CD4-positive, alpha-beta memory T cell (primary cell): ENCODE measurements at regions of chr3 and their contacts with region 1.

Region 1: DNA sequence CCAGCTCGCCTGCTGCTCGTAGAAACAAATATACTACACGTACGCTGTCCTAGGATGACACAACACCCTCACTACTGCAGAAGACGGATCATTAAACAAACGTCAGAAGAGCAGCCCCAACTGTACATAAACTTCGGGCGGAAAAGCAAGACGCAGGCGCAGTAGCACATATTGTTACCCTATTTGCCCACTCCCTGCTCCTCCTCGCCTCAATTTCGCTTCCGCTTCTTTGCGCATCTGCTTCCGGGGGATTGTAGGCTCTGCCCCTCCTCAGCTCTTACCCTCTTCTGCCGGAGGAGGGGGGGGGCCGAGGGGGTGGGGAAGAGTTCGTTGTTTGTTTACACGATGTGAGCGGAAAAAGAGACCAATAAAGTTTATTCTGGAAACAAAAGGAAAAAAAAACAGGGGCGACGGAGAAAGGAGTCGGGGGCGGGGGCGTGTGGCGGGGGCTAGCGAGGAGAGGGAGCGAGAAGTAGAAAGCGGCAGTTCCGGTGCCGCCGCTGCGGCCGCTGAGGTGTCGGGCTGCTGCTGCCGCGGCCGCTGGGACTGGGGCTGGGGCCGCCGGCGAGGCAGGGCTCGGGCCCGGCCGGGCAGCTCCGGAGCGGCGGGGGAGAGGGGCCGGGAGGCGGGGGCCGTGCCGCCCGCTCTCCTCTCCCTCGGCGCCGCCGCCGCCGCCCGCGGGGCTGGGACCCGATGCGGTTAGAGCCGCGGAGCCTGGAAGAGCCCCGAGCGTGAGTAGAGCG is at the start of gene PIK3CA:
- DNase-seq: peak; percentile 92 to 99 (median 97)
- H3K4me3 ChIP-seq: peak within 1 kb of the TSS; percentile 72 to 91
- H3K4me3 Mint-ChIP-seq: peak within 1 kb of the TSS; percentile 96 to 100 (median 98)
- H3K27ac ChIP-seq: peak within 1 kb of the TSS; percentile 89
- H3K27ac Mint-ChIP-seq: peak within 1 kb of the TSS in 6 of 7 donors; percentile 96 to 99 (median 98)
- H3K4me1 ChIP-seq: peaks cover 40% of the 10 kb centered on the region
- H3K4me1 Mint-ChIP-seq: peaks cover 26 to 41% (median 31%) of the 10 kb centered on the region in 4 donors
- H3K27me3 ChIP-seq: no peaks in the 10 kb centered on the region
- H3K27me3 Mint-ChIP-seq: no peaks in the 10 kb centered on the region
- total RNA-seq, gene PIK3CA: 45.5 to 47.2 TPM

Region 2: GRCh38 chr3:177251755-177252154 is 1896.3 kb before region 1 on chr3:
- CTCF ChIA-PET with region 1: no interaction called
- POLR2A ChIA-PET with region 1: no interaction called
- intact Hi-C with region 1: no loop called
- DNase-seq: no peak
- H3K4me3 ChIP-seq: no peak overlapping the region
- H3K4me3 Mint-ChIP-seq: no peak overlapping the region
- H3K27ac ChIP-seq: no peak overlapping the region
- H3K27ac Mint-ChIP-seq: no peak overlapping the region
- H3K4me1 ChIP-seq: no peaks in the 10 kb centered on the region
- H3K4me1 Mint-ChIP-seq: peaks cover 0 to 2% (median 0%) of the 10 kb centered on the region in 4 donors
- H3K27me3 ChIP-seq: no peaks in the 10 kb centered on the region
- H3K27me3 Mint-ChIP-seq: no peaks in the 10 kb centered on the region

Region 3: DNA sequence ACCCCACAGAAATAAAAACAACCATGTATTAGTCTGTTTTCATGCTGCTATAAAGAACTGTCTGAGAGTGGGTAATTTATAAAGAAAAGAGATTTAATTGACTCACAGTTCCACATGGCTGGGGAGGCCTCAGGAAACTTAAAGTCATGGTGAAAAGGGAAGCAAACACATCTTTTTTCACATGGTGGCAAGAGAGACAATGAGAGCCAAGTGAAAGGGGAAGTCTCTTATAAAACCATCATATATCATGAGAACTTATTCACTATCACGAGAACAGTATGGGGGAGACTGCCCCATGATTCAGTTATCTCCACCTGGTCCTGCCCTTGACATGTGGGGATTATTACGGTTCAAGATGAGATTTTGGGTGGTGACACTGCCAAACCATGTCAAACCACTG is 217.9 kb before region 1 on chr3:
- CTCF ChIA-PET with region 1: no interaction called
- POLR2A ChIA-PET with region 1: no interaction called
- intact Hi-C with region 1: no loop called
- DNase-seq: no peak
- H3K4me3 ChIP-seq: no peak overlapping the region
- H3K4me3 Mint-ChIP-seq: no peak overlapping the region
- H3K27ac ChIP-seq: no peak overlapping the region
- H3K27ac Mint-ChIP-seq: no peak overlapping the region
- H3K4me1 ChIP-seq: no peaks in the 10 kb centered on the region
- H3K4me1 Mint-ChIP-seq: no peaks in the 10 kb centered on the region
- H3K27me3 ChIP-seq: no peaks in the 10 kb centered on the region
- H3K27me3 Mint-ChIP-seq: no peaks in the 10 kb centered on the region

Region 4: GRCh38 chr3:179037351-179037750 is 110.7 kb before region 1 on chr3:
- CTCF ChIA-PET with region 1: interaction called, 5 read pairs
- POLR2A ChIA-PET with region 1: interaction called, 17 read pairs
- intact Hi-C with region 1: no loop called
- DNase-seq: peak; percentile 61 to 71 (median 65)
- H3K4me3 ChIP-seq: peak overlapping the region in 1 of 2 donors; percentile 27
- H3K4me3 Mint-ChIP-seq: peak overlapping the region in 7 of 8 donors; percentile 47 to 79 (median 75)
- H3K27ac ChIP-seq: peak overlapping the region; percentile 24
- H3K27ac Mint-ChIP-seq: peak overlapping the region in 1 of 7 donors; percentile 90
- H3K4me1 ChIP-seq: peaks cover 43% of the 10 kb centered on the region
- H3K4me1 Mint-ChIP-seq: peaks cover 11 to 23% (median 15%) of the 10 kb centered on the region in 4 donors
- H3K27me3 ChIP-seq: no peaks in the 10 kb centered on the region
- H3K27me3 Mint-ChIP-seq: no peaks in the 10 kb centered on the region

Region 5: DNA sequence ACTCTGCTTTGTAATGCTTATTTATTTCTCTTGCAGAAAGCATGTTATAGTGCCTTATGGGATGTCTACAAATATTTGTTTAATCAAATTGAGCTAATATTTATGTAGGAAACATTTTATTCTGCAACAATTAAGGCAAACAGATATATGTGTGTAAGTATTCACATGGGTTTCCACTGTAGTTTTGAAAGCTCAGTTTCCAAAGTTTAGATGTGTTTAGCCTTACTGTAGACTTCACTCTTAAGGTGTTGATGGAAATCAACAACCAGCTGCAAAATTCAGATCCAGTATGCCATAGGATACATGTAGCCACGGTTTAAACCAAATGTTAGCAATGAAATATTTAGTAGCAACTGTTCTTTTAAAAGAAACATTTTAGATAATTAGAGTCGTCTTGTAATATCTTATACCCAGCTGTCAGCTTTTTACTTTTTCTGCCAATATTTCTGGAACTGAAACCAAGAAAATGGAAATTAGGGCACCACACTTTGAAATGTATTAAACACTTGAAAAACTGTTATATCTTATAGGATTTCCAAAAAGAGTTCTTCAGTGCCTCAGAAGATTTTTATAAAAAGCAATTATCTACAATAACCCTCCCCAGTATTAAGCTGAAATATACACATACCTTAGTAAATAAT is 18.6 kb after region 1 on chr3:
- CTCF ChIA-PET with region 1: no interaction called
- POLR2A ChIA-PET with region 1: interaction called, 7 read pairs
- intact Hi-C with region 1: loop called (anchors 2 kb)
- DNase-seq: no peak
- H3K4me3 ChIP-seq: no peak overlapping the region
- H3K4me3 Mint-ChIP-seq: no peak overlapping the region
- H3K27ac ChIP-seq: no peak overlapping the region
- H3K27ac Mint-ChIP-seq: peak overlapping the region in 1 of 7 donors; percentile 50
- H3K4me1 ChIP-seq: peaks cover 13% of the 10 kb centered on the region
- H3K4me1 Mint-ChIP-seq: peaks cover 33 to 44% (median 38%) of the 10 kb centered on the region in 4 donors
- H3K27me3 ChIP-seq: no peaks in the 10 kb centered on the region
- H3K27me3 Mint-ChIP-seq: no peaks in the 10 kb centered on the region

Region 6: DNA sequence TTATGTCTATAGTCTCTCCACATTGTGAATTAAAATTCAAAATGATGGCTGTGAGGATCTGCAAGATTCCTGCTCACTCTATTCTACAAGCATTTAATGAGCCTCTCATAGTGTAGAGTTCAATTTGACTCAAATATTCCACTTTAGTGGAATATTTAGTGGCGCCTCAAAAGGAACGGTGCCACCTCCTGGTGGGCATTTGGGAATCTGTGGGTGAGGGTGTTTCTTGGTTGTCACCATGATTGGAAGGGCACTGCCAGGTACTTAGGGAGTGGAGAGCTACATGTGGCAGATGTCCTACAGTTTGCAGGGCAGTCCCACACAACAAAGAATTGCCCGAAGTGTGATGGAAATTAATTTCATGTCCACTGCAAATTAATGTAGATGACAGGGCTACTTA is 124.3 kb after region 1 on chr3:
- CTCF ChIA-PET with region 1: interaction called, 7 read pairs
- POLR2A ChIA-PET with region 1: interaction called, 10 read pairs
- intact Hi-C with region 1: loop called (anchors 1 kb)
- DNase-seq: no peak
- H3K4me3 ChIP-seq: no peak overlapping the region
- H3K4me3 Mint-ChIP-seq: no peak overlapping the region
- H3K27ac ChIP-seq: no peak overlapping the region
- H3K27ac Mint-ChIP-seq: peak overlapping the region in 1 of 7 donors; percentile 1
- H3K4me1 ChIP-seq: no peaks in the 10 kb centered on the region
- H3K4me1 Mint-ChIP-seq: no peaks in the 10 kb centered on the region
- H3K27me3 ChIP-seq: no peaks in the 10 kb centered on the region
- H3K27me3 Mint-ChIP-seq: peaks cover 7 to 17% of the 10 kb centered on the region in 2 donors

Region 7: GRCh38 chr3:179562591-179563270 is 414.7 kb after region 1 on chr3 and contains the start of gene ACTL6A:
- CTCF ChIA-PET with region 1: interaction called, 4 read pairs
- POLR2A ChIA-PET with region 1: interaction called, 4 read pairs
- intact Hi-C with region 1: loop called (anchors 1 kb)
- DNase-seq: peak; percentile 96 to 98 (median 96)
- H3K4me3 ChIP-seq: peak within 1 kb of the TSS; percentile 67 to 76
- H3K4me3 Mint-ChIP-seq: peak within 1 kb of the TSS; percentile 96 to 100 (median 99)
- H3K27ac ChIP-seq: peak within 1 kb of the TSS; percentile 58
- H3K27ac Mint-ChIP-seq: peak within 1 kb of the TSS; percentile 81 to 98 (median 97)
- H3K4me1 ChIP-seq: peaks cover 29% of the 10 kb centered on the region
- H3K4me1 Mint-ChIP-seq: peaks cover 22 to 37% (median 28%) of the 10 kb centered on the region in 4 donors
- H3K27me3 ChIP-seq: no peaks in the 10 kb centered on the region
- H3K27me3 Mint-ChIP-seq: peaks cover 0 to 4% of the 10 kb centered on the region in 2 donors
- total RNA-seq, gene ACTL6A: 56.9 to 62.4 TPM

Region 8: GRCh38 chr3:180601688-180602666 is 1453.9 kb after region 1 on chr3 and contains the start of gene TTC14:
- CTCF ChIA-PET with region 1: no interaction called
- POLR2A ChIA-PET with region 1: interaction called, 4 read pairs
- intact Hi-C with region 1: loop called (anchors 5 kb)
- DNase-seq: peak; percentile 92 to 94 (median 93)
- H3K4me3 ChIP-seq: peak within 1 kb of the TSS; percentile 67 to 89
- H3K4me3 Mint-ChIP-seq: peak within 1 kb of the TSS; percentile 90 to 98 (median 96)
- H3K27ac ChIP-seq: peak within 1 kb of the TSS; percentile 89
- H3K27ac Mint-ChIP-seq: peak within 1 kb of the TSS; percentile 95 to 99 (median 97)
- H3K4me1 ChIP-seq: peaks cover 30% of the 10 kb centered on the region
- H3K4me1 Mint-ChIP-seq: peaks cover 19 to 42% (median 26%) of the 10 kb centered on the region in 4 donors
- H3K27me3 ChIP-seq: no peaks in the 10 kb centered on the region
- H3K27me3 Mint-ChIP-seq: peaks cover 5 to 6% of the 10 kb centered on the region in 2 donors
- total RNA-seq, gene TTC14: 168 to 177 TPM